ENCODE measurements at regions of chr2 and their contacts with region 1.

Region 1: DNA sequence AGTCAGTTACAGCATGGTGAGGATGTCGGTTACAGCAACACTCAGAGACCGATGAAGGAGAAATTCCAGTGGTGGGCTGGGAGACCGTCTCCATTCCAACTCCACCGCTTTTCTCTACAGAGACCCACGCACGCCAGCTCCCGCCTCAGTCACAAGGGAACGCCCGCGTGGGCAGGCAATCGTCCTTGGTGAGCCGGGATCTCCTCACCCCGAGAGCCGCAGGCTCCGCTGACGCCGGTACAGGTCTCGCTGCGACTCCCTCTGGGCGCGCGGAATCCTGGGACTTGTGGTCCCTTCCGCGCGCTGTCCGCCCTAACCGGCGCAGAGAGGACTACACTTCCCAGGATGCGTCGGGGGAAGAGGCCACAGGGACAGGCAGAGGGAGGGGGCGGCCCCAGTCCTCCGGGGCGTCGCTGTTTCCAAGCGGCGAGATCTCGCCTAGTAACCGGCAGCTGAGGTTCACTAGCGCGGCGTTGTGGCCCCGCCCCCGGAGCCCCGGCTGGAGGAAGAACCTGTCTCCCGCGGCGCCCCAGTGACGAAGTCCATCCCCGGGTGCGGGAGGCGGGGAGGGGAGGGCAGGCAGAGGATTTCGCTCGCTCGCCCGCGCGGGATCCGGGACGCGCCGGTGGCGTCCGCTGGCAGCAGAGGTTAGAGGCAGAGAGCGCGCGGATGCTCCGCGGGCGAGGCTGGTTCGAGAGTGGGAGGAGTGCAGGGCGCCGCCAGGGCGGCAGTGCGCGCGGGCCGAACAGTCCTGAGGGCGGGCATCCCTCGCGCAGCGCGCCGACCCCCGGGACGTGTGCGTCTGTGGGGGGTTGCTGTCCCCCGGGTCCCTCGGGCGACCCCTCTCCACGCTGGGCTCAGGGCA is at the start of gene EML6:
- DNase-seq: peak; percentile 91
- H3K4me3 ChIP-seq: peak within 1 kb of the TSS; percentile 76
- H3K27ac ChIP-seq: peak within 1 kb of the TSS; percentile 33
- H3K27me3 ChIP-seq: peaks cover 26% of the 10 kb centered on the region
- CTCF ChIP-seq: 0 out of 2 replicates have a peak, but pooled peaks have one; percentile 18
- polyA plus RNA-seq, gene EML6: 0.12 and 0.30 TPM in 2 replicates

Region 2: DNA sequence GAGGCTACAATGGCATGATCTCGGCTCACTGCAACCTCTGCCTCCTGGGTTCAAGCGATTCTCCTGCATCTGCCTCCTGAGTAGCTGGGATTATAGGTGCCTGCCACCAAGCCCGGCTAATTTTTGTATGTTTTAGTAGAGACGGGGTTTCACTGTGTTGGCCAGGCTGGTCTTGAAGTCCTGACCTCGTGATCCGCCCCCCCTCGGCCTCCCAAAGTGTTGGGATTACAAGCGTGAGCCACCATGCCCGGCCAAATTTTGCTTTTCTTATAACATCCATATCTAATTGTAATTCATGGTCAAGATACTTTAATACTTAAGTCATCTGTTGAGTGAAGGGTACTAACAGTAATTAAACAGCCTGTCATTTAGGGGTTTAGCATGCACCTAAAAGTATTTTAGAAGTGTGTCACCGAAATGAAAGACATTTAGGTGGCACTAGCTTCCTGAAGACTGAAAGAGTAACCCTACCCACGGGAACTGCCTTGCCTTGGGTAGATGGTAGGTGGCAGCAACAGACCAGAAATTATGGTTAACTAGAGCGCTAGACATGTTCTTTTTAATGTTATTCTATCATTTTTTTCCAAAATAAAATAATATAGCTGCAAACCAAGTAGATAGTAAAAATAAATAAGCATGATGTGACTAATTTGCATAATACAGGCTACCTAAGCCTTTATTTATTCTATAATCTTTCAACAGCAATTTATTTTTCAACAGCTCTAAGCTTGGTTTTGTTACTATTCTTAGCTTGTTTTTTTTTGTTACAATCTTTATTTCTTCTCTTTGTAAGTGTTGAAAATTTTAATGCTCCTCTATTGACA is 616.5 kb before region 1 on chr2:
- CTCF ChIA-PET with region 1: interaction called, 12 read pairs
- POLR2A ChIA-PET with region 1: no interaction called
- DNase-seq: no peak
- H3K4me3 ChIP-seq: no peak overlapping the region
- H3K27ac ChIP-seq: no peak overlapping the region
- H3K27me3 ChIP-seq: no peaks in the 10 kb centered on the region
- CTCF ChIP-seq: peak; percentile 81

Region 3: GRCh38 chr2:54673501-54673998 is 49.8 kb before region 1 on chr2:
- CTCF ChIA-PET with region 1: no interaction called
- POLR2A ChIA-PET with region 1: no interaction called
- DNase-seq: no peak
- H3K4me3 ChIP-seq: no peak overlapping the region
- H3K27ac ChIP-seq: no peak overlapping the region
- H3K27me3 ChIP-seq: peaks cover 3% of the 10 kb centered on the region
- CTCF ChIP-seq: no peak

Measured in AG04450 (cell line).